ENCODE measurements at regions of chr5 and their contacts with region 1.

Region 1: DNA sequence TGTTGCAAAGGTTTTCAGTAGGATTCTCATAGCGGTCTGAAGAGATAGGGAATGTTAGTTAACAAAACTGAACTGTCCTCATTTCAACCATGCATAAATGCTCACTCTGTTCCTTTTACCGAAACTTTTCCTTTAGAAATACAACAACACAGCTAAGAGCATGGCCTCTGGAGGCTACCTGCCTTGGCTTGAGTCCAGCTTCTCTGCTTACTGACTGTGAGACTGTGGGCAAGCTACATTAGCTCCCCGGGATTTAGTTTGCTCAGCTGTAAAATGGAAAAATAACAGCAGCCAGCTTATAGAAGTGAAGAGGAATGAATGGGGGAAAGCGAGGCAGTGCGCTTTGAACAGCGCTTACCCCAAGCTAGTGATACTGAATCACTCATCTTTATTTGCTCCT is 507.9 kb upstream of the DAP start:
- DNase-seq: no peak
- H3K4me3 Mint-ChIP-seq: no peak overlapping the region
- H3K27ac Mint-ChIP-seq: no peak overlapping the region
- H3K4me1 Mint-ChIP-seq: no peaks in the 10 kb centered on the region
- H3K27me3 Mint-ChIP-seq: peaks cover 20% of the 10 kb centered on the region
- CTCF ChIP-seq: no peak

Region 2: GRCh38 chr5:11258001-11258400 is 10.9 kb before region 1 on chr5:
- CTCF ChIA-PET with region 1: interaction called, 20 read pairs
- POLR2A ChIA-PET with region 1: no interaction called
- intact Hi-C with region 1: no loop called
- DNase-seq: no peak
- H3K4me3 Mint-ChIP-seq: no peak overlapping the region
- H3K27ac Mint-ChIP-seq: no peak overlapping the region
- H3K4me1 Mint-ChIP-seq: peaks cover 3% of the 10 kb centered on the region
- H3K27me3 Mint-ChIP-seq: no peaks in the 10 kb centered on the region
- CTCF ChIP-seq: no peak

Region 3: DNA sequence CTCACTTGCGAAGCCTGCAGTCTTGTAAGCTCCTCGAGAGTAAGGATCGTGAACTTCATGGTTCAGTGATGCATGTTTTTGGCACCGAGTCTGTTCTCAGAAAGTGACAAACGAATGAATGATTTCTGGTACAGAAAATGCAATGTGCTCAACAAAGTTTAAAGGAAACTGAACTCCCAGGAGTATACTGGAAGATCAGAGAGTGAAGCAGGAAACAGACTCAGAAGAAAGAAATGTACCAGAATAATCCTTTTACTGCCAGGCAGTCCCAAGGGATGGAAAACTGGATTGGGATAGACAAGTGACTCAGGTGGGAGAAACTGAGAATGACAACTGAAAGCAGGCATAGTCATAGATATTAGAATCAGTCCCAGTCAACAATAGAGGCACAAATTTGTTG is 214.7 kb after region 1 on chr5:
- CTCF ChIA-PET with region 1: interaction called, 8 read pairs
- POLR2A ChIA-PET with region 1: no interaction called
- intact Hi-C with region 1: loop called (anchors 1 kb)
- DNase-seq: no peak
- H3K4me3 Mint-ChIP-seq: no peak overlapping the region
- H3K27ac Mint-ChIP-seq: no peak overlapping the region
- H3K4me1 Mint-ChIP-seq: no peaks in the 10 kb centered on the region
- H3K27me3 Mint-ChIP-seq: peaks cover 42% of the 10 kb centered on the region
- CTCF ChIP-seq: no peak

Region 4: GRCh38 chr5:11619339-11620024 is 350.6 kb after region 1 on chr5:
- CTCF ChIA-PET with region 1: interaction called, 10 read pairs
- POLR2A ChIA-PET with region 1: no interaction called
- intact Hi-C with region 1: loop called (anchors 1 kb)
- DNase-seq: peak; percentile 49
- H3K4me3 Mint-ChIP-seq: no peak overlapping the region
- H3K27ac Mint-ChIP-seq: no peak overlapping the region
- H3K4me1 Mint-ChIP-seq: peaks cover 12% of the 10 kb centered on the region
- H3K27me3 Mint-ChIP-seq: peaks cover 23% of the 10 kb centered on the region
- CTCF ChIP-seq: peak; percentile 29

Region 5: DNA sequence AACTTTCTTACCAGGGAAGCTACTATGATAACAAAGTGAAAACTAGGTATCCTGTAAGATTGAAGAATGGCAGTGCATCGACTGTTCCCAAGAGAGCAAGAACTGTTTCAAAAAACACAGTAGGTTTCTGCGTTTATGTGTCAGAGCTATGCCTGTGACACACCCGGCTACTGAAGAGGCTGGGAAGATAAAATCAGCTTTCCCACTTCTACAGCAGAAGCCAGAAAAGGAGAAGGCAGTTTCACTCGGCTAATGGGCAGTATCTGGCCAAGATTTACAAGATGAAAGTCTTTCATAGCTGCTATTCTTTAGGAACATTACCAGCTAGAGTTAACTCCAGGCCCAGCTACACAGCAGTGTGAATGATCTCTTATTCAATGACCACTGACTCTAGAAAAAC is 440.1 kb after region 1 on chr5:
- CTCF ChIA-PET with region 1: no interaction called
- POLR2A ChIA-PET with region 1: no interaction called
- intact Hi-C with region 1: no loop called
- DNase-seq: no peak
- H3K4me3 Mint-ChIP-seq: no peak overlapping the region
- H3K27ac Mint-ChIP-seq: no peak overlapping the region
- H3K4me1 Mint-ChIP-seq: peaks cover 3% of the 10 kb centered on the region
- H3K27me3 Mint-ChIP-seq: no peaks in the 10 kb centered on the region
- CTCF ChIP-seq: no peak

Region 6: GRCh38 chr5:12017007-12017406 is 748.1 kb after region 1 on chr5:
- CTCF ChIA-PET with region 1: interaction called, 30 read pairs
- POLR2A ChIA-PET with region 1: no interaction called
- intact Hi-C with region 1: loop called (anchors 2 kb)
- DNase-seq: no peak
- H3K4me3 Mint-ChIP-seq: no peak overlapping the region
- H3K27ac Mint-ChIP-seq: no peak overlapping the region
- H3K4me1 Mint-ChIP-seq: no peaks in the 10 kb centered on the region
- H3K27me3 Mint-ChIP-seq: no peaks in the 10 kb centered on the region
- CTCF ChIP-seq: no peak

Measured in MCF 10A (cell line).